ENCODE measurements at regions of chr2 and their contacts with region 1.

Region 1: GRCh38 chr2:20642055-20642971 is 8.6 kb downstream of the HS1BP3 start:
- DNase-seq: peak; percentile 62 to 80 (median 65)
- H3K4me3 ChIP-seq: no peak overlapping the region
- H3K4me3 Mint-ChIP-seq: no peak overlapping the region
- H3K27ac ChIP-seq: no peak overlapping the region
- H3K27ac Mint-ChIP-seq: peak overlapping the region in 3 of 8 donors; percentile 47 to 63 (median 63)
- H3K4me1 ChIP-seq: peaks cover 8% of the 10 kb centered on the region
- H3K4me1 Mint-ChIP-seq: peaks cover 0 to 11% (median 6%) of the 10 kb centered on the region in 3 donors
- H3K27me3 ChIP-seq: no peaks in the 10 kb centered on the region
- H3K27me3 Mint-ChIP-seq: no peaks in the 10 kb centered on the region

Region 2: DNA sequence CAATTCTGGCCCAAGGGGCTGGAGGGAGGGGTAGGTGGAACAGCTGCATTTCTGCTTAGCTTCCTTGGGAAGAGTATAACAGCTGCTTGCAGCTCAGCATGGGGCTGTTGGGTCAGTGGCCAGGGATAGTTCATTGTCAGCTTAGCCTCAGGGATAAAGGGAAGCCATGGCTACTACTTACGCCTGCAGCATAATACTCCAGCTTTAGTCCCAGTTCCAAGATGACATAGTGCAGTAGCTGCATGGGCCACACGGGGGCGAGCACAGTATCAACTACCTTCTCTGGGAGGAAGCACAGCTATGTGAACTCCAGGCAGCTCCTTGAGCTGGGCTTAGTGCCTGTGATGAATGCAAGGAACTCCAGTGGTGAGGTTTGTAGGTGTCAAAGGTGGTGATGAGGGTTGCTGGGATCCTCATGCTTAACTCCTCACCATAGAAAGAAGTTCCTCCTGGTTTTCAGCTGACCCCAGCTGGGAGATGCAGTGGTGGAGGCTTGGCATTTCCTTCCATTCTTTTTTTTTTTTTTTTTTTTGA is 230.9 kb before region 1 on chr2:
- CTCF ChIA-PET with region 1: interaction called, 51 read pairs
- POLR2A ChIA-PET with region 1: no interaction called
- DNase-seq: peak; percentile 46 to 76 (median 55)
- H3K4me3 ChIP-seq: no peak overlapping the region
- H3K4me3 Mint-ChIP-seq: no peak overlapping the region
- H3K27ac ChIP-seq: no peak overlapping the region
- H3K27ac Mint-ChIP-seq: no peak overlapping the region
- H3K4me1 ChIP-seq: no peaks in the 10 kb centered on the region
- H3K4me1 Mint-ChIP-seq: peaks cover 0 to 2% (median 0%) of the 10 kb centered on the region in 3 donors
- H3K27me3 ChIP-seq: no peaks in the 10 kb centered on the region
- H3K27me3 Mint-ChIP-seq: peaks cover 11 to 12% of the 10 kb centered on the region in 2 donors

Region 3: GRCh38 chr2:20440001-20440560 is 202.2 kb before region 1 on chr2:
- CTCF ChIA-PET with region 1: interaction called, 87 read pairs
- POLR2A ChIA-PET with region 1: no interaction called
- DNase-seq: no peak
- H3K4me3 ChIP-seq: no peak overlapping the region
- H3K4me3 Mint-ChIP-seq: no peak overlapping the region
- H3K27ac ChIP-seq: no peak overlapping the region
- H3K27ac Mint-ChIP-seq: no peak overlapping the region
- H3K4me1 ChIP-seq: no peaks in the 10 kb centered on the region
- H3K4me1 Mint-ChIP-seq: no peaks in the 10 kb centered on the region
- H3K27me3 ChIP-seq: no peaks in the 10 kb centered on the region
- H3K27me3 Mint-ChIP-seq: peaks cover 19 to 39% of the 10 kb centered on the region in 2 donors

Region 4: GRCh38 chr2:20539776-20540586 is 102.3 kb before region 1 on chr2:
- CTCF ChIA-PET with region 1: no interaction called
- POLR2A ChIA-PET with region 1: no interaction called
- DNase-seq: no peak
- H3K4me3 ChIP-seq: no peak overlapping the region
- H3K4me3 Mint-ChIP-seq: no peak overlapping the region
- H3K27ac ChIP-seq: no peak overlapping the region
- H3K27ac Mint-ChIP-seq: no peak overlapping the region
- H3K4me1 ChIP-seq: no peaks in the 10 kb centered on the region
- H3K4me1 Mint-ChIP-seq: peaks cover 0 to 1% (median 0%) of the 10 kb centered on the region in 3 donors
- H3K27me3 ChIP-seq: no peaks in the 10 kb centered on the region
- H3K27me3 Mint-ChIP-seq: peaks cover 4 to 8% of the 10 kb centered on the region in 2 donors

Region 5: GRCh38 chr2:20551260-20551944 is 90.9 kb before region 1 on chr2:
- CTCF ChIA-PET with region 1: no interaction called
- POLR2A ChIA-PET with region 1: no interaction called
- DNase-seq: no peak
- H3K4me3 ChIP-seq: no peak overlapping the region
- H3K4me3 Mint-ChIP-seq: no peak overlapping the region
- H3K27ac ChIP-seq: no peak overlapping the region
- H3K27ac Mint-ChIP-seq: no peak overlapping the region
- H3K4me1 ChIP-seq: no peaks in the 10 kb centered on the region
- H3K4me1 Mint-ChIP-seq: no peaks in the 10 kb centered on the region
- H3K27me3 ChIP-seq: no peaks in the 10 kb centered on the region
- H3K27me3 Mint-ChIP-seq: peaks cover 0 to 3% of the 10 kb centered on the region in 2 donors

Region 6: DNA sequence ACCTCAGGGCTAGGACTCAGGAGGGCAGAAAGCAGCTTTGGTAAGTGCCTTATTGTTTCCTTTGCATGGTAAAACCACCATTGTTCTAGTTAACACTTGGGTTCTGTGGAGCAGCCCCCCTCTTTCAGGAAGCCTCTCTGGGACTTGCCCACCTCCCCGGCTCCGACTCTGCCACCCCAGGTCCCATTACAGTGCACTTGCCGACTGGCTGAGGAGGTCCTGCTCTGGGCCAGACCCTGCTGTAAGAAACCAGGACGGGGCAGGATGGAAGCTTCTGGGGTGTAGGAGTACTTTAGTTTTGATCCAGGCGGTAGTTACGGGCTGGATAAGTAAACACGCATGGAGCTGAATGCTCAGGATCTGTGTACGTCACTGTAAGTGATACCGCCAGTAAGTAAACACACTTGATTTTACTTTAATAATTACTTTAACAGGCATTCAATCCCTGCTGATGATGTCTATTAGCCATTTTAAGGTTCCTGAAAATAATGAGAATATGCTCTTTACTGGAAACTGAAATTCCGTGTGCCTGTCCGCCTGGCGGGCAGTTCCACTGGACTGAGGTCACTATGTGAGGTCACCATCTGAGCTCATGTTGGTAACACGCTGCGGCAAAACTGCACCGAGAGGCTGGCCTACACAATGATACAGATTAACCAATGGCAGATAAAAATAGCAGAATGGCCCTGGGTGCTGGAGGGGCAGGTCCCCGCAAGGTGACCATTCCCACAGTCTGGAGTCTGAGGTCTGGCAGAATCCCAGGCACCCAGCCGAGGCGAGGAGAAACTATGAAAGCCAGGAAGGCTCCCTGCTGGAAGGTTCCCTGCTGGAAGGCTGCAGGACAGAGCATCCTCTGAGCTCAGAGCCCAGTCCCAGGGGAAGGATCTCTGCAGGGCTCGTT is 16.6 kb before region 1 on chr2:
- CTCF ChIA-PET with region 1: interaction called, 10 read pairs
- POLR2A ChIA-PET with region 1: no interaction called
- DNase-seq: peak in 1 of 5 donors; percentile 26
- H3K4me3 ChIP-seq: no peak overlapping the region
- H3K4me3 Mint-ChIP-seq: no peak overlapping the region
- H3K27ac ChIP-seq: no peak overlapping the region
- H3K27ac Mint-ChIP-seq: peak overlapping the region in 1 of 8 donors; percentile 87
- H3K4me1 ChIP-seq: no peaks in the 10 kb centered on the region
- H3K4me1 Mint-ChIP-seq: no peaks in the 10 kb centered on the region
- H3K27me3 ChIP-seq: no peaks in the 10 kb centered on the region
- H3K27me3 Mint-ChIP-seq: no peaks in the 10 kb centered on the region

Region 7: GRCh38 chr2:20661067-20661980 is 19.0 kb after region 1 on chr2:
- CTCF ChIA-PET with region 1: interaction called, 18 read pairs
- POLR2A ChIA-PET with region 1: no interaction called
- DNase-seq: peak; percentile 35 to 77 (median 58)
- H3K4me3 ChIP-seq: no peak overlapping the region
- H3K4me3 Mint-ChIP-seq: no peak overlapping the region
- H3K27ac ChIP-seq: no peak overlapping the region
- H3K27ac Mint-ChIP-seq: peak overlapping the region in 1 of 8 donors; percentile 23
- H3K4me1 ChIP-seq: peaks cover 4% of the 10 kb centered on the region
- H3K4me1 Mint-ChIP-seq: peaks cover 4 to 16% (median 7%) of the 10 kb centered on the region in 3 donors
- H3K27me3 ChIP-seq: peaks cover 42% of the 10 kb centered on the region
- H3K27me3 Mint-ChIP-seq: peaks cover 39 to 81% of the 10 kb centered on the region in 2 donors

Measured in CD8-positive, alpha-beta memory T cell (primary cell).